Endothelial cell of umbilical vein (primary cell): ENCODE measurements at regions of chr9 and their contacts with region 1.

Region 1: GRCh38 chr9:131590908-131591844 is 45.9 kb downstream of the PRRT1B start:
- DNase-seq: peak; percentile 73
- H3K4me3 ChIP-seq: no peak overlapping the region
- H3K27ac ChIP-seq: no peak overlapping the region
- H3K4me1 ChIP-seq: peaks cover 13% of the 10 kb centered on the region
- H3K27me3 ChIP-seq: no peaks in the 10 kb centered on the region
- CTCF ChIP-seq: peak; percentile 72 to 90
- POLR2A ChIP-seq: no peak

Region 2: DNA sequence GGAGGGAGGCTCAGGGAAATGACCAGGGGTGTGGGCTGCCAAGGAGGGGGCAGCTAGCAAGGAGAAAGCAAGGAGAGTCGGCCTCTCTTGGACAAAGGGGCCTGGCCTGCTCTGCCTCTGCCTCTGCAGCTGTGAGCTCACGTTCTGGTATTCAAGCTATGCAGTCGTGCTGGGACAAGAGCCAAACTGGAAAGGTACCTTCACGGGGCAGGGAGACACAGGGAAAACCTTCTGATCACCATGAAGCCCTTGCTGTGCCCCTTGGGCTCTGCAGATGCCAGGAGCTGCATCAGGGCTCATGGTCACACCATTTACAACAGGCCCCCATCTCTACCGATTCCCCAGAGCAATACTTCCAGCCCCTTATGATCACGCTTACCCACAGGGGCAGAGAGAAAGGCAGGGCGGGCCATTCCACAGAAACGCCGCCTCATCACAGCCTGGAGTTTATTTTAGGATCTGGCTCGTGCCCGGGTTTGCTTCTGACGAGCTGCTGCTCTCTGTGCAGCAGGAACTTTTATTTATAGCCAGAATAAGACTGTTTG is 17.4 kb after region 1 on chr9:
- CTCF ChIA-PET with region 1: interaction called, 15 read pairs
- POLR2A ChIA-PET with region 1: no interaction called
- dilution Hi-C with region 1: no loop called
- intact Hi-C with region 1: loop called (anchors 1 kb)
- DNase-seq: peak; percentile 85
- H3K4me3 ChIP-seq: no peak overlapping the region
- H3K27ac ChIP-seq: peak overlapping the region; percentile 45
- H3K4me1 ChIP-seq: peaks cover 17% of the 10 kb centered on the region
- H3K27me3 ChIP-seq: no peaks in the 10 kb centered on the region
- CTCF ChIP-seq: no peak
- POLR2A ChIP-seq: no peak

Region 3: GRCh38 chr9:131709771-131710454 is 118.7 kb after region 1 on chr9:
- CTCF ChIA-PET with region 1: interaction called, 18 read pairs
- POLR2A ChIA-PET with region 1: no interaction called
- dilution Hi-C with region 1: no loop called
- intact Hi-C with region 1: loop called (anchors 1 kb)
- DNase-seq: peak; percentile 83
- H3K4me3 ChIP-seq: no peak overlapping the region
- H3K27ac ChIP-seq: peak overlapping the region; percentile 79
- H3K4me1 ChIP-seq: peaks cover 55% of the 10 kb centered on the region
- H3K27me3 ChIP-seq: no peaks in the 10 kb centered on the region
- CTCF ChIP-seq: no peak
- POLR2A ChIP-seq: no peak

Region 4: DNA sequence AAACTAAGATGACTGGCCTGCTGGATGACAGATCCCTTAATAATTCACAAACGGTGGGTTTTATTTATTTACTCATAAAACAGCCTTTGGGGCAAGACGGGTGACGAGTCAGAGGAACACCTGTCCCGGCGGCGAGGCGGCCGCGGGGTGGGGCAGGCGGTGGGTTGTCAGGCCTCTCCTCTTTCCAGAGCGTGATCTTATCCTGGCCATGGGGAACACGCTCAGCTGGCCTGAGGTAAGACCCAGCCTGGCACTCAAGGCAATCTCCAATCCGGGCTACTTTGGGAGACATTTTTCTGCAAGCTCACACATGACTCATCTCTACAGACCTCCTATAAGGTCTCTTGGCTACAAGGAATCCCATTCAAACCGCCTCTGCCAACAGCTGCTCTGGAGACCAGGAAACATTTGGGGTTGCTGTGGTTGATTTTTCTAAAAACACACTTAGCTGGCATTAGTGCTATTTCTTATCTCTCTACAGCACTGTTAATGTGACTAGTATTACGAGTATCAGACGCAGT is 142.4 kb after region 1 on chr9:
- CTCF ChIA-PET with region 1: interaction called, 89 read pairs
- POLR2A ChIA-PET with region 1: no interaction called
- dilution Hi-C with region 1: no loop called
- intact Hi-C with region 1: no loop called
- DNase-seq: peak; percentile 97
- H3K4me3 ChIP-seq: no peak overlapping the region
- H3K27ac ChIP-seq: peak overlapping the region; percentile 87
- H3K4me1 ChIP-seq: peaks cover 81% of the 10 kb centered on the region
- H3K27me3 ChIP-seq: no peaks in the 10 kb centered on the region
- CTCF ChIP-seq: no peak
- POLR2A ChIP-seq: no peak

Region 5: GRCh38 chr9:131739980-131740648 is 148.9 kb after region 1 on chr9 and contains the start of gene RAPGEF1:
- CTCF ChIA-PET with region 1: interaction called, 89 read pairs
- POLR2A ChIA-PET with region 1: no interaction called
- dilution Hi-C with region 1: no loop called
- intact Hi-C with region 1: loop called (anchors 1 kb)
- DNase-seq: no peak
- H3K4me3 ChIP-seq: peak within 1 kb of the TSS; percentile 36 to 84 (median 75)
- H3K27ac ChIP-seq: peak within 1 kb of the TSS; percentile 73
- H3K4me1 ChIP-seq: peaks cover 32% of the 10 kb centered on the region
- H3K27me3 ChIP-seq: no peaks in the 10 kb centered on the region
- CTCF ChIP-seq: peak; percentile 75 to 77
- POLR2A ChIP-seq: no peak
- total RNA-seq, gene RAPGEF1: 124 TPM in 2 replicates

Region 6: DNA sequence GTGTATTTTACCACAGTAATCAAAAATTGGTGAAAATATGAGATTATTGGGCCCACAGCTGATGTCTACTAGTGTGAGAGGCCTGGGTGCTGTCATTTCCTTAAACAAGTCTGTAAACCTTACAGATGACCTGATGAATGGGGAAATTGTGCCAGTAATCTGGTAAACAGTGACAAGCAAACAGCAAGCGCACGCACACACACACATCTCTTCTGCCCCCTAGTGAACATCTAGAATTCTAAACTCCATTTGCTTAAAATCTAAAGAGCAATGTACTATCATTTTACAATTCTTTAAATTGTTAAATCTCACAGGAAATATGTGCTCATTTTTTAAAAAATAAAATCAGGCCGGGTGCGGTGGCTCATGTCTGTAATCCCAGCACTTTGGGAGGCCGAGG is 156.2 kb after region 1 on chr9:
- CTCF ChIA-PET with region 1: interaction called, 89 read pairs
- POLR2A ChIA-PET with region 1: no interaction called
- dilution Hi-C with region 1: no loop called
- intact Hi-C with region 1: loop called (anchors 1 kb)
- DNase-seq: peak; percentile 72
- H3K4me3 ChIP-seq: no peak overlapping the region
- H3K27ac ChIP-seq: no peak overlapping the region
- H3K4me1 ChIP-seq: no peaks in the 10 kb centered on the region
- H3K27me3 ChIP-seq: peaks cover 0 to 3% of the 10 kb centered on the region in 2 experiments
- CTCF ChIP-seq: peak; percentile 50 to 63
- POLR2A ChIP-seq: no peak